Heart left ventricle (tissue), 16 donors: ENCODE measurements at regions of chr1 and their contacts with region 1.

Region 1: GRCh38 chr1:54273092-54273794 is 73.3 kb downstream of the MRPL37 start:
- DNase-seq: peak in 4 of 5 donors; percentile 56 to 91 (median 68)
- ATAC-seq: peak; percentile 64 to 84 (median 76)
- H3K4me3 ChIP-seq: peak overlapping the region in 2 of 12 donors; percentile 7 to 14
- H3K27ac ChIP-seq: peak overlapping the region; percentile 25 to 94 (median 81)
- H3K4me1 ChIP-seq: peaks cover 11 to 86% (median 66%) of the 10 kb centered on the region in 12 donors
- H3K27me3 ChIP-seq: no peaks in the 10 kb centered on the region
- CTCF ChIP-seq: peak in 7 of 12 donors; percentile 15 to 53 (median 44)
- POLR2A ChIP-seq: no peak

Region 2: GRCh38 chr1:54052934-54053744 is 220.1 kb before region 1 on chr1 and contains the starts of genes TCEANC2 and TMEM59:
- intact Hi-C with region 1: loop called in 1 of 10 experiments (anchors 5 kb)
- DNase-seq: peak; percentile 98 to 99 (median 98)
- ATAC-seq: peak; percentile 96 to 98 (median 98)
- H3K4me3 ChIP-seq: peak within 1 kb of the TSS; percentile 88 to 99 (median 95)
- H3K27ac ChIP-seq: peak within 1 kb of the TSS; percentile 88 to 98 (median 94)
- H3K4me1 ChIP-seq: peaks cover 0 to 51% (median 41%) of the 10 kb centered on the region in 12 donors
- H3K27me3 ChIP-seq: no peaks in the 10 kb centered on the region
- CTCF ChIP-seq: peak in 1 of 12 donors; percentile 7
- POLR2A ChIP-seq: peak in 1 of 2 donors; percentile 63
- total RNA-seq, gene TCEANC2: 3.0 to 6.6 (median 4.6) TPM
- total RNA-seq, gene TMEM59: 193 to 496 (median 352) TPM

Region 3: GRCh38 chr1:54121482-54122134 is 151.6 kb before region 1 on chr1:
- intact Hi-C with region 1: loop called in 4 of 10 experiments (anchors 5 to 10 kb)
- DNase-seq: peak; percentile 77 to 89 (median 82)
- ATAC-seq: peak; percentile 80 to 94 (median 88)
- H3K4me3 ChIP-seq: peak overlapping the region in 10 of 12 donors; percentile 17 to 44 (median 24)
- H3K27ac ChIP-seq: no peak overlapping the region
- H3K4me1 ChIP-seq: peaks cover 0 to 13% (median 8%) of the 10 kb centered on the region in 12 donors
- H3K27me3 ChIP-seq: peaks cover 0 to 4% (median 0%) of the 10 kb centered on the region in 9 donors
- CTCF ChIP-seq: peak; percentile 62 to 87 (median 77)
- POLR2A ChIP-seq: no peak

Region 4: GRCh38 chr1:54218883-54219687 is 54.2 kb before region 1 on chr1:
- intact Hi-C with region 1: loop called in 1 of 10 experiments (anchors 5 kb)
- DNase-seq: no peak
- ATAC-seq: peak in 2 of 4 donors; percentile 4 to 23
- H3K4me3 ChIP-seq: no peak overlapping the region
- H3K27ac ChIP-seq: peak overlapping the region in 8 of 12 donors; percentile 29 to 74 (median 54)
- H3K4me1 ChIP-seq: peaks cover 0 to 45% (median 23%) of the 10 kb centered on the region in 12 donors
- H3K27me3 ChIP-seq: no peaks in the 10 kb centered on the region
- CTCF ChIP-seq: peak in 3 of 12 donors; percentile 5 to 22 (median 22)
- POLR2A ChIP-seq: no peak

Region 5: DNA sequence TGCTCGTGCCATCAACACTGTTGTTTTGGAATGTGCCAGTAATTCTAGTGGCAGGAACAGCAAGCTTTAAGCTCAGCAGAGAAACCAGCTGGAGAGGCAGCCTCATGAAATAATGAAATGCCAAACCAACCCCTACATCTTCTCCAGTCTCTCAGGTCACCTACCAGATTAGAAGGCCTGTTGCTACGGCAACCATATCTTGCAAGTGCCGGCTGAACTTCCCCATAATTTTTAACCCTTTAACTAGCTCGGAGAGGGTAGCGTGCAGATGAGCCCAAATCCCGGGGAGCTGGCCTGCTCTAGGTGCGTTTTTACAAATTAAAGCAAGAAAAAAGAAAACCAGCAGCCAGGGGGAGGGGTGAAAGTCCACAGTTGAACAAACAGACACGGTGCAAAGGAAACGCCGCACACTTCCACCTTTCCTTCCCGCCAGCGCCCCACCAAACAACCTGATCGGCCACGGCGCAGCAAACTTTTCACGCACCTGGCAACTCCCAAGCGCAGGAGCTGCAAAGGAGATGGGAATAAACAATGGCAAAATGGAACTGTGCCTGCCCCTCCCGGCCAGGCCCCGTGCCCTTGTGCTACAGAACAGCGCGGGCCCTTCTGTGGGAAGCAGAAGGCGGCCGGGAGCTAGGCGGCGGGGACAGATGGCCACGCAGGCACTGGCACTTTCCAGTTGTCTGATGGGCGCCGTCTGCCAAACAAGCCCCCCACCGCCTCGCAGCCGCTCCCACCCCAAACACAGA is 82.9 kb after region 1 on chr1:
- intact Hi-C with region 1: loop called in 3 of 10 experiments (anchors 5 to 10 kb)
- DNase-seq: no peak
- ATAC-seq: no peak
- H3K4me3 ChIP-seq: peak overlapping the region in 4 of 12 donors; percentile 11 to 39 (median 15)
- H3K27ac ChIP-seq: peak overlapping the region in 5 of 12 donors; percentile 2 to 30 (median 13)
- H3K4me1 ChIP-seq: peaks cover 4 to 86% (median 57%) of the 10 kb centered on the region in 12 donors
- H3K27me3 ChIP-seq: no peaks in the 10 kb centered on the region
- CTCF ChIP-seq: no peak
- POLR2A ChIP-seq: no peak

Region 6: GRCh38 chr1:54417123-54417522 is 143.9 kb after region 1 on chr1:
- intact Hi-C with region 1: no loop called
- DNase-seq: no peak
- ATAC-seq: peak in 1 of 4 donors; percentile 16
- H3K4me3 ChIP-seq: no peak overlapping the region
- H3K27ac ChIP-seq: peak overlapping the region in 1 of 12 donors; percentile 42
- H3K4me1 ChIP-seq: peaks cover 0 to 16% (median 5%) of the 10 kb centered on the region in 12 donors
- H3K27me3 ChIP-seq: no peaks in the 10 kb centered on the region
- CTCF ChIP-seq: no peak
- POLR2A ChIP-seq: no peak